B cell (primary cell): ENCODE measurements at regions of chr3 and their contacts with region 1.

Region 1: DNA sequence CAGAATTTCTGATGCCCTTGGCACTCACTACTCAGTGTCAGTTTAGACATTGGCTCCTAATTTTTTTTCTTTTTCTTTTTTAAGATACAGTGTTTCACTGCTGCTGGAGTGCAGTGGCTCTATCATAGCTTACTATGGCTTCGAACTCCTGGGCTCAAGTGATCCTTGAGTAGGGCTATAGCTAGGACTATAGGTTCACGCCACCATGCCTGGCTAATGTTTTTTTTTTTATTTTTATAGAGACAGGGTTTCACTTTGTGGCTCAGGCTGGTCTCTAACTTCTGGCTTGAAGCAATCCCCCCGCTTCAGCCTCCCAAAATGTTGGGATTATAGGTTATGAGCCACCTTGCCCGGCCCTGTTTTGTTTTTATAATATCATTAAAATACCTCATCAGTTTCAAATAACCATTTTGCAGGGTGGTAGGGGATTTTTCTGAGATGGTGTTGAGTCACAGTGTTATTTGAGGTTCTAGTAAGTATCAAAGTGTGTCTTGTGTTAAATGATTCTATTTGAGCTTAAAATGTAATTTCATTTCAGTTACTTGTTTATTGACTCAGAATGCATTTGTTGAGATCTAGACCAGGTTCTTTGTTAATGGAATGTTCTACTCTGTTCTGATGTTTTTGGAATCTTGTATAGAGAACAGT is 7.0 kb downstream of the FNDC3B start:
- DNase-seq: no peak
- ATAC-seq: no peak
- H3K4me3 ChIP-seq: no peak overlapping the region
- H3K4me3 Mint-ChIP-seq: no peak overlapping the region
- H3K27ac ChIP-seq: no peak overlapping the region
- H3K27ac Mint-ChIP-seq: no peak overlapping the region
- H3K4me1 ChIP-seq: no peaks in the 10 kb centered on the region
- H3K4me1 Mint-ChIP-seq: no peaks in the 10 kb centered on the region
- H3K27me3 ChIP-seq: no peaks in the 10 kb centered on the region
- H3K27me3 Mint-ChIP-seq: no peaks in the 10 kb centered on the region
- CTCF ChIP-seq: no peak

Region 2: GRCh38 chr3:172061724-172062184 is 15.4 kb after region 1 on chr3:
- CTCF ChIA-PET with region 1: interaction called, 5 read pairs
- POLR2A ChIA-PET with region 1: no interaction called
- intact Hi-C with region 1: loop called (anchors 1 kb)
- DNase-seq: peak; percentile 71
- ATAC-seq: peak; percentile 94
- H3K4me3 ChIP-seq: peak overlapping the region; percentile 2 to 47 (median 40)
- H3K4me3 Mint-ChIP-seq: peak overlapping the region; percentile 79
- H3K27ac ChIP-seq: no peak overlapping the region
- H3K27ac Mint-ChIP-seq: no peak overlapping the region
- H3K4me1 ChIP-seq: peaks cover 19 to 23% of the 10 kb centered on the region in 2 donors
- H3K4me1 Mint-ChIP-seq: peaks cover 26% of the 10 kb centered on the region
- H3K27me3 ChIP-seq: peaks cover 0 to 31% (median 23%) of the 10 kb centered on the region in 4 experiments
- H3K27me3 Mint-ChIP-seq: peaks cover 26% of the 10 kb centered on the region
- CTCF ChIP-seq: no peak

Region 3: DNA sequence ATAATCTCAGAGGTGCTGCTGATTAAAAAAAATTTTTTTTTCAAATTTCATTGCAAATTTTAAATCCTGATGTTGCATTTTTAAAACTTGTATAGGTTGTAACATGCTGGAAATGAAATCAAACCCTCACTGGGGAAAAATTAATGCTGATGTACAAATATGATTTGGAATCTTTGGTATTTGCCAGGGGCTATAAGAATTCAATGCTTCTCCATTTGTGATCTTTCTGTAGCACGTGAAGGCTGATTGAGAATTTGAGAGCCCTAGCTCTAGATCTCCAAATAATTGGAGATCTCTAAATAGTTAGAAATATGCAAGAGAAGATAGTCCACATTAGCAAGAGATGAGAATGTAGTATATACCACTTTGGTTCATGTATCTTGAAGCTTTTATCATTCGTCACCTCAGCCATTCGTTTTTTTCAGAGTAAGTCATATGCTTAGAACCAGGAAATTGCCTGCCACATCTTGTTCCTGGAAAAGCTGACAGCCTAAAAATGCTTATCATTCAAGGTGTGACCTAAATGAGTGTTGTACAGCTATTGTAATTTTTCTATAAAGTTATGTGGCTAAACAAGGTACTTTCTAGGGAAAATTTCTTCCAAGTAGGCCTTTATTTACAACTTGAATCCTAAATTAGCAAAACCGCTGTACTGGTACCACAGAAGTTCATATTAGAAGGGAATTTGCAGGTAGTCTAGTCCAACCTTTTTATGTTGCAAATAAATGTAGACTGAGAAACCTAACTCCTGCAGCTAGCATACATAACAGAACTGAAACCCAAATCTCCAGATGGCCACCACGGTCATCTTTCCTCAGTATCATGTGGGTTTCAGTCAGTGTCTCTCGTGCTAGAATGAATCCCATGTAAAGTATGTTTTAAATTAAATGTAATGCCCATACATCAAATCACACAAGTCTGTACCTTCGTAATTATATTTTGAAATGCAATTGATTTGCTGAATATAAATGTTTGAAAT is 41.5 kb after region 1 on chr3:
- CTCF ChIA-PET with region 1: no interaction called
- POLR2A ChIA-PET with region 1: no interaction called
- intact Hi-C with region 1: no loop called
- DNase-seq: no peak
- ATAC-seq: no peak
- H3K4me3 ChIP-seq: no peak overlapping the region
- H3K4me3 Mint-ChIP-seq: no peak overlapping the region
- H3K27ac ChIP-seq: no peak overlapping the region
- H3K27ac Mint-ChIP-seq: no peak overlapping the region
- H3K4me1 ChIP-seq: no peaks in the 10 kb centered on the region
- H3K4me1 Mint-ChIP-seq: no peaks in the 10 kb centered on the region
- H3K27me3 ChIP-seq: peaks cover 0 to 4% (median under 1%) of the 10 kb centered on the region in 4 experiments
- H3K27me3 Mint-ChIP-seq: peaks cover 10% of the 10 kb centered on the region
- CTCF ChIP-seq: no peak